Aorta (tissue), 5 donors: ENCODE measurements at regions of chr20 and their contacts with region 1.

Region 1: DNA sequence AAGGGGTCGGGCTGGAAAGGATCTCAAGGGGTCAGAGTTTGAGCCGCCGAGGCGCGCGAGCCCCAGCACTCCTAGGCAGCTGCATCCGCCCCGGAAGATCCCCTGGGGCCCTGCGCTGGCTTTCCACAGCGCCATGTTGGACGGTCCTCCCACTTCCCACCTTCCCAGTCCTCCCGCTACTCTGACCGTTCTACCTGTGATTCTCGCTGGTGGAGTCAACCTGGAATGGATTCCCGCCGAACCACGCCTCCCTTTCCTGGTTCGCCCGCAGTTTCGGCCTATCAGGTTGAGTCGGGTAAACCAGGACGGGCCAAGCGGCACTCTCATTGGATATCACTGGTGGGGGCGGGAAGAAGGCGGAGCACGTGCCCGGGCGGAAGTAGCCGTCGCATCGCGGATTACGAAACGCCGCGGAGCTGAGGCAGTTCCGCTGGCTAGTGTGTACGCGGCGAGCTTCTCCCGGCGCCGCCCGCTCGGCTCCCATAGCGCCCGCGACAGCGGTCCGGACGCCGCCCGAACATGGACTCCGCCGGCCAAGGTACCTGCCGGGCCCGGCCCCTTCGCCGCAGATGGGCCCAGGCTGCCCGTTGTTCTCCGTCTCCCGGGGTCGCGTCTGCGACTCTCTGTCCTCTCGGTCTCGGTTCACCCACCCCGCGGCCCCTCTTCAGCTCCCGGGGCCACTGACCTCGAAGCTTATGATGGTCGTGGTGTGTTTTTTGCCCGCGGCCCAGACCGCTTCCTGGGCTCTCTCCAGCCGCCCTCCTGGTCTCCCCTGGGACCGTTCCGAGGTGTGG is at the start of gene TPD52L2:
- DNase-seq: peak; percentile 99
- ATAC-seq: peak; percentile 95
- H3K4me3 ChIP-seq: peak within 1 kb of the TSS; percentile 22 to 63
- H3K27ac ChIP-seq: peak within 1 kb of the TSS; percentile 11 to 53
- H3K4me1 ChIP-seq: no peaks in the 10 kb centered on the region
- H3K27me3 ChIP-seq: no peaks in the 10 kb centered on the region
- total RNA-seq, gene TPD52L2: 91.2 to 110 TPM

Region 2: GRCh38 chr20:63785691-63786131 is 79.3 kb before region 1 on chr20:
- intact Hi-C with region 1: loop called (anchors 2 to 5 kb)
- DNase-seq: no peak
- ATAC-seq: no peak
- H3K4me3 ChIP-seq: no peak overlapping the region
- H3K27ac ChIP-seq: no peak overlapping the region
- H3K4me1 ChIP-seq: no peaks in the 10 kb centered on the region
- H3K27me3 ChIP-seq: no peaks in the 10 kb centered on the region

Region 3: DNA sequence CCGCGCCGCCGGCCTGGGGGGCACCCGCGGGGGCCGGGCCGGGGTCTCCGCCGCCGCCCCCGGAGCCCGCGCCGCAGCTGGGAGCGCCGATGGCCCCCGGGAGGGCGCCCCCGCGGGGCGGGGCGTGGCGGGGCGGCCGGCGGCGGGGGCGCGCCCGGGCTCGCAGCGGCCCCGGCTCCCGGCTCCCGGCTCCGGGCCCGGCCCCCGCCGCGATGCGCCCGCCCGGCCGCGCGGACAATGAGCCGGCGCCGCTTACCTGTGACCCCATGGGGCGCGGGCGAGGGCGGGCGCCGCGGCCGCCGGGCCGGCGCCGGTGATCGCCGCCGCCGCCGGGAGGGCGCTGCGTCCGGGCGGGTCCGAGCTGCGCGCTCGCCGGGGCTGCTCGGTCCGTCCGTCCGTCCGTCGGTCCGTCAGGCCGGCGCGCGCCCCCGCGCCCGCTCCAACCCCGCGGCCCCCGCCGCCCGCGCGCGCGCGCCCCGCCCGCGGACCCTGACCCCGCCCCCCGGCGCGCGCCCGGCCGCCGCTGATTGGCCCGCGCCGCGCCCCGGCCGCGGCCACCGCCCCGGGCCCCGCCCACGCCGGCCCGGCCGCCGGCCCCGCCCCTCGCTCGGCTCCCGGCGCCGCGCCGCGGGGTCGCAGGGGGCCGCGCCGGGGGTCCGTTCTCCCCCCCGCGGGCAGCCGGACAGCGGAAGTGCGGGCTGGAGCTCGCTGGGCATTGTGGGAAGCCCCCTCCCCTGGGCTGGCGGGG is 34.0 kb before region 1 on chr20 and contains the start of gene ZBTB46:
- intact Hi-C with region 1: loop called in 1 of 2 experiments (anchors 5 kb)
- DNase-seq: peak in 1 of 2 donors; percentile 82
- ATAC-seq: no peak
- H3K4me3 ChIP-seq: peak within 1 kb of the TSS; percentile 78 to 90
- H3K27ac ChIP-seq: no peak within 1 kb of the TSS
- H3K4me1 ChIP-seq: no peaks in the 10 kb centered on the region
- H3K27me3 ChIP-seq: no peaks in the 10 kb centered on the region
- total RNA-seq, gene ZBTB46: 17.4 to 22.7 TPM

Region 4: DNA sequence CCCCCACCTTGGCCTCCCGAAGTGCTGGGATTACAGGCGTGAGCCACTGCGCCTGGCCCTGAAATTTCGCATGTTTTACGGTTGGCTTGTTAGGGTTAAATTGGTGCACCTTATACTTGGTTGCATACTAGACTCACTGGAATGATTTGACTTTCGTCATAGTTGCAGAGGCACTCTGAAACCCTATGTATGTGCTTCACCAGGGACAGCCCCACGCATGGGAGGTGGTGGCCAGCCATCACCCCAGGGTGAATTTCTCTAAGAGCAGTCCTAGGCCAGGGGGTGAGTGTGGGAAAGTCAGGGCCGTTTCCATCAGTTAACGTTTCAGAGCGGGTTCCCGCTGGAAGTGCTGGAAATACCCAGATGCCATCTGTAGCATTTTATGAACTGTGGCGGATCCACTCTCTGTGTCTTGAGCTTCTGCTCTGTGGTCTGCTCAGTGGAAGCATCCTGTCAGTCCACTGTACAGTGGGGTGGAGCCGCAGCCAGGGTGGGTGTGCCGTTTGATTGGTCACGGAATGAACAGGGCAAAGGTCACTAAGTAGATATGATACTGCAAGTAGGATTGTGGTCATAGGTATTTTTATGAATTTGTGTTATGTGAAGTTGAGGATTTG is 43.1 kb after region 1 on chr20:
- intact Hi-C with region 1: no loop called
- DNase-seq: no peak
- ATAC-seq: no peak
- H3K4me3 ChIP-seq: no peak overlapping the region
- H3K27ac ChIP-seq: no peak overlapping the region
- H3K4me1 ChIP-seq: no peaks in the 10 kb centered on the region
- H3K27me3 ChIP-seq: no peaks in the 10 kb centered on the region

Region 5: DNA sequence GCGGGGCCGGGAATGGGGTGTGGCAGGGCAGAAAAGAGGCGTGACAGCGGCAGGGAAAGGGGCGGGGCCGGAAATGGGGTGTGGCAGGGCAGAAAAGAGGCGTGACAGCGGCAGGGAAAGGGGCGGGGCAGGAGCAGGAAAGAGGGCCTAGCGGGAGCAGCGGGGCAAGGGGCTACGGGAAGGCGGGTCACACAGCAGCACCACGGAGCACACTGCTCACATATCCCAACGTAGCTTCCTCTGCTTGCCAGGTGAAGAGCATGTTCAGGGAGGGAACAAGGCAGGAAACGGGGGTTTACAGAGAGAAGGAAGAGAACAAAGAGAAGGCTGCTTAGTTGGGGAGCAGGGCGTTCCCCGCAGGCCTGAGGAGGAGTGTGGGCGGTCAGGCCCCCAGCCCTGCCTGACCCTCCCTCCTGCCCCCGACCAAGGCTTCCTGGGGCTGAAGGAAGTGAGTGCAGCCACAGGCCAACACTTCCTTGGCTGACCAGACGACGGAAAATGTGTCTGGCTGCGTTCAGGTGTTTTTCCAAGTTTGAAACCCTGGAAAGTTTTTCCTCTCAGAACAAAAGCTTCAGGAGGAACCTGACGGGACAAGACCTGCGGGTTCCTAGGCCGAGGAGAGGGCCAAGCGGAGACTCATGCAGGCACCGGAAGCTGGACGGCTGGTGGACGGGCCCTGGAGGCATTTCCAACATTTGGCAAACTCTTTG is 77.4 kb after region 1 on chr20:
- intact Hi-C with region 1: no loop called
- DNase-seq: peak in 1 of 2 donors; percentile 49
- ATAC-seq: no peak
- H3K4me3 ChIP-seq: no peak overlapping the region
- H3K27ac ChIP-seq: no peak overlapping the region
- H3K4me1 ChIP-seq: no peaks in the 10 kb centered on the region
- H3K27me3 ChIP-seq: no peaks in the 10 kb centered on the region

Region 6: DNA sequence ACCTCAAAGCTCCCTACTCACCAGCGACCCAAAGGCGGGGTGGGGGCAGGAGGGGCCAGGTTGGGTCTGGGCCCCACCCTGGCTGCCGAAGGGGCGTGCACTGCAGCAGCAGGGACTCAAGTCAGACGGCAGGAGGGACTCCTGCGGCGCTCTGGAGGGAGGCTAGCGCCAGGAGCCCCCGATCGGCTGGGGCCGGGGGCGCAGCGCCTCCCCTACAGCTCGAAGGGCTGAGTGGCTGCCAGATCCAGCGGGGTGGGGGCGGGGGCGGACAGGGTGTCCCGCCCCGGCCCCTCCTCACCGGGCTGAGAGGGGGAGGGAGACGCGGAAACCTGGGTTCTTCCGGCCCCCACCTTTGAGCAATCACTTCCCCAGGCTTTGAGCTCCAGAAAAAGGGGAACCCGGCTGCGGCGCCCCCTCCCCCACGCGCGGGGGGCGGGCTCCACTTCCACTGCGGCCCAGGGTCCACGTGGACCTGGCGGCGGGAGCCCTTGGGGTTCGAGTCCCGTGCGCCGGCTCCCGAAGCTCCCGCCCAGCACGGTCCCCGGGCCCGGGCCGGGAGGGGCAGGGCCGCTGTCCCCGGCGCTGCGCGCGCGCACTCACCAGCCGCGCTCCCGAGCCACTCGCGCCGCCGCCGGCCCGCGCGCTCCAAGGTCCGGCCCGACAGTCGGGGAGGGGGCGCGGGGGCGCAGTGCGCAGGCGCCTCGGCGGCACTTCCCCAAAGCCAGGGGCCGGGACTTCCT is 214.4 kb after region 1 on chr20 and contains the start of gene RGS19:
- intact Hi-C with region 1: no loop called
- DNase-seq: peak; percentile 90 to 92
- ATAC-seq: peak; percentile 67
- H3K4me3 ChIP-seq: peak within 1 kb of the TSS; percentile 46 to 66
- H3K27ac ChIP-seq: no peak within 1 kb of the TSS
- H3K4me1 ChIP-seq: no peaks in the 10 kb centered on the region
- H3K27me3 ChIP-seq: no peaks in the 10 kb centered on the region
- total RNA-seq, gene RGS19: 19.0 to 20.1 TPM